ENCODE measurements at regions of chr10 and their contacts with region 1.

Region 1: DNA sequence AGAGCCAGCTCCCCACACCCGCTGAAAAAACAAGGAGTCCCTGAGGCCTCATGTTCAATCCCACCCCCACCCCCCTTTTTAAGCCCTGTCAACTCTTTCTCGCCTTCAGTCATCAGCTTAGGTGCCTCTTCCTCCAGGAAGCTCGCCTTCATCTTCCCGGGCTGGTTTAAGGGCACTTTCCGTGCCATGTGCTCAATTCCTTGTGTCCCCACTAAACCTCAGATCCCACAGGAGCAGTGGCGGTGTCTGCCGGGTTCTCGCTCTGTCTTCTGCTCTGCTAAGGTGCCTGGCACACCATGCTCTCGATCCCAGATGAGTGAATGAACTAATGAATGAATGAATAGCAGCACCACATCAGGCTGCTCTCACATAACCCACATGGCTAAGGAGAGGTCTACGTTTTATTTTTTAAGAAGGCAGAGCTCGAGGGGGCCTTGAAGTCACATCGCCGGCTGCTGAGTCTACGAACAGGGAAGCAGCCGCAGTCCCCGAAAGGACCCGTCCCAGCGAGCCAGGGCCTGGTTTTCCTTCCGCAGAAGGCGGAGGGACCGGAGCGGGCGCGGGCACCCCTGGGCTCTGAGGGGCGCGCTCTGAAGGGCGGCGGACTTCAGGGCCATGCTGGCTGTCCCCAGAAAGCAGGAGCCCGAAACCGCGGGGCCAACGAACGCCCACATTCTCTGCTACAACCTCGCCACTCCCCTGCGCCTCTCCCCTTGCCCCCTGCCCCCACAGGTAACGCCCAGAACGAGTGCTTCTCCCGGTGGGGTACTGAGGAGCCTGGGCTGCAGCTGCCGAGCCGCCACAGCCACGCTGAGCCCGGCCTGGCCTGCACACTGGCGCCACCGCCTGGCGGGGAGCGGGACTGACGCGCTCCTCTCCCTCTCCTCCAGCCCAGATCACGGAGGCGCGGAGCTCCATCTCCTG is 73.4 kb upstream of the KCNMA1 start:
- DNase-seq: peak; percentile 89
- ATAC-seq: peak; percentile 99

Region 2: GRCh38 chr10:77165445-77166208 is 545.4 kb before region 1 on chr10:
- intact Hi-C with region 1: loop called (anchors 5 kb)
- DNase-seq: no peak
- ATAC-seq: peak; percentile 71

Region 3: DNA sequence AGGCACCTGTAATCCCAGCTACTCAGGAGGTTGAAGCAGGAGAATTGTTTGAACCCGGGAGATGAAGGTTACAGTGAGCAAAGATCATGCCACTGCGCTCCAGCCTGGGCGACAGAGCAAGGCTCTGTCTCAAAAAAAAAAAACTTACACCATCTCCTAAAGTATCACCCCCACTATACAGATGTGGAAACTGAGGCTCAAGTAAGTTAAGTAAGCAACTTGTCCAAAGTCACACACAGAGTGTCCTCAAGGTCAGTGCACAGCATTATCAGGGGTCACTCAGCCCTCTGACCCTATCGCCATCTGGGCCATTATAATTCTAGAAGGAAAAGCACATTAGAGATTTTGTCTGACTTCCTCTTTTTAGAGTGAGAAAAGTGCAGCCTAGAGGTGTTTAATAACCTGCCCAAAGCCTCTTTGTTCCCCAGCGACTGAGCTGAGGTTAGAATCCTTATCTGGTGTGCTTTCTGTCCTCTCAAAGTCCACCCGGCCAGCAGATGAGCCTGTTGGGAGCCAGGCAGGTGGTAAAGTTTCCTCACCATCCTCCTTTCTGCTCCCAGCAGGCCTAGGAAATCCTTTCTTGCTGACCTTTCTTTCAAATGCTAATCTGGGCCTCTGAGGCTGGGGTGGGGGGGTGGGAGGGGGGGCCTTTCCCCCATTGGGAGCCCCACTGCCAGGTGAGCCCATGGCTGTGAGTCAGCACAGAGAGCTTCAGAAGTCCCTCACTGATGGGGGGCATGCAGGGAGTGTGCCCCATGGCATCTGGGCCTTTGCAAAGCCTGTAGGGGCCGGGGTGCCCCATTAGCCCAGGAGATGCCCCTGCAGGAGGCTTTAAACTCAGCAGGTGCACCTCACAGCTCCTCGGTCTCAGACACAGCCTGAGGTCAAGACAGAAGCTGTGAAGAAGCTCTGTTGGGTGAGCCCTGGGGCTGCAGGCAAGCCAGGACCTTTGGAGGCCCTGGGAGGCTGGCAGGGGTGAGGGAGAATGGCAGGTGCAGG is 61.4 kb before region 1 on chr10:
- intact Hi-C with region 1: no loop called
- DNase-seq: no peak
- ATAC-seq: no peak

Region 4: GRCh38 chr10:77873536-77874380 is 162.7 kb after region 1 on chr10:
- intact Hi-C with region 1: no loop called
- DNase-seq: no peak
- ATAC-seq: peak; percentile 21